ENCODE measurements at regions of chr6 and their contacts with region 1.

Region 1: GRCh38 chr6:99868074-99868702 is 125.8 kb downstream of the MCHR2 start:
- DNase-seq: no peak
- H3K4me3 ChIP-seq: peak overlapping the region; percentile 24
- CTCF ChIP-seq: peak; percentile 80

Region 2: DNA sequence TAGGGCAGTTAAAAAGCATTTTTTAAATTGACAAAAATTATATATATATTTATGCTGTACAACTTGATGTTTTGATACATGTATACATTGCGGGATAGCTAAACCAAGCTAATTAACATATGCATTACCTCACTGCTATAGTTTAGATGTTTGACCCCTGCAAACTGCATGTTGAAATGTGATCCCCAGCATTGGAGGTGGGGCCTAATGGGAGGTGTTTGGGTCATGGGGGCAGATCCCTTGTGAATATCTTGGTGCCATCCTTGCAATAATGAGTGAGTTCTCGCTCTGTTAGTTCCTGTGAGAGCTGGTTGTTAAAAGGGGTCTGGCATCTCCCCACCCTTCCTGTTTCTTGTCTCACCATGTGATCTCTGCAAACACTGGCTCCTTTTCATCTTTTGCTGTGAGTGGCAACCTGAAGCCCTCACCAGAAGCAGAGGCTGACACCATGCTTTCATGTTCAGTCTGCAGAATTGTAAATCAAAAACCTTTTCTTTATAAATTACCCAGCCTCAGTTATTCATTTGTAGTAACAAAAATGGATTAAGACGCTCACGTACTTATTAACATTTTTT is 14.0 kb after region 1 on chr6:
- CTCF ChIA-PET with region 1: interaction called, 49 read pairs
- POLR2A ChIA-PET with region 1: no interaction called
- DNase-seq: no peak
- H3K4me3 ChIP-seq: no peak overlapping the region
- CTCF ChIP-seq: no peak

Region 3: GRCh38 chr6:99993533-99994251 is 125.5 kb after region 1 on chr6 and contains the start of gene MCHR2:
- CTCF ChIA-PET with region 1: interaction called, 19 read pairs
- POLR2A ChIA-PET with region 1: no interaction called
- DNase-seq: no peak
- H3K4me3 ChIP-seq: peak within 1 kb of the TSS; percentile 29
- CTCF ChIP-seq: no peak

Region 4: GRCh38 chr6:100078509-100078908 is 210.3 kb after region 1 on chr6:
- CTCF ChIA-PET with region 1: interaction called, 19 read pairs
- POLR2A ChIA-PET with region 1: no interaction called
- DNase-seq: no peak
- H3K4me3 ChIP-seq: no peak overlapping the region
- CTCF ChIP-seq: peak; percentile 43

Region 5: GRCh38 chr6:100093405-100093804 is 225.2 kb after region 1 on chr6:
- CTCF ChIA-PET with region 1: interaction called, 350 read pairs
- POLR2A ChIA-PET with region 1: no interaction called
- DNase-seq: no peak
- H3K4me3 ChIP-seq: no peak overlapping the region
- CTCF ChIP-seq: no peak

Region 6: DNA sequence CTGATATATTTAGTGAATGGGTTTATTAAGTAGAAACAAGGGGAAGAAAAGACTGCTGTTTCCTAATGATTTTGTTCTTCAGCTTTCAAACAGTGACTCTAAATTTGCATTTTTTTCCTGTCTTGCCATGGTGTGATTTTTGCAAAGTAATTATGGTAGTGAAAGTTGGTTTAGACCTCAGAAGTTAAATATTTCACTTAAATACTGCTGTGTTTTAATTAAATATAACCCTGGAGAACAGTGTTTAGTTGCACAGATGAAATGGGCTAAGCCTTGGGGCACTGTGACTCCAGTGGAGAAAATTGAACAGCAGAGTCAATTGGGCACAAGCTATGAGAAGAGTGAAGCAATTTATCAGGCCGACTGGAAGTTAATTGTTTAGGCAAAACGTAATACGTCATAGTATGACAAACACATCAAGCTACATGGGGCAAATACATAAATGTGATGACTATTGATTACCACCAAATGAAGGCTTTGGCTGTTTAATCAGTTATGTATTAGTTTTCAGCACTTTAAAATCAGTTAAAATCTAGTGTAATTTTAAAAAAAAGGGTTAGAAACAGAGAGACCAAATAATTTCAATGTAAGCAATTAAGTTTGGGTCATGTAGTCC is 237.1 kb after region 1 on chr6:
- CTCF ChIA-PET with region 1: interaction called, 350 read pairs
- POLR2A ChIA-PET with region 1: no interaction called
- DNase-seq: no peak
- H3K4me3 ChIP-seq: no peak overlapping the region
- CTCF ChIP-seq: no peak

Region 7: DNA sequence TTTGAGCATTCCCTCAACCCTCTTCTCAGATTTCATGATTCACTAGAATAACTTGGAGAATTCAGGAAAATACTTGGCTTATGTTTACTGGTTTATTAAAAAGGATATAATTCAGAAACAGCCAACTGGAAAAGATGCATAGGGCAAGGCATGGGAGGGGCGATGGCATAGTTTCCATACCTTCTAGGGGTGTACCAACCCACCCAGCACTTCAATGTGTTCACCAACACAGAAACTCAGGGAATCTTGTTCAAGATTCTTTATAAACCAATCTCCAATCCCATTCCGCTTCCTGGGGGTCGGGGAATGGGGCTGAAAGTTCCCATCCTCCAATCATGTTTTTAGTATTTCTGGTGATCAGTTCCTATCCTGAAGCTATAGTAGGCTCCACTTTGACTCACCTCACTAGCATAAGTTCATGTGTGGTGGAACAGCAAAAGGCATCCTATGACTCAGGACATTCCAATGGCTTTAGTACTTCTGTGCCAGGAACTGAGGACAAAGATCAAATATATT is 432.1 kb after region 1 on chr6:
- CTCF ChIA-PET with region 1: no interaction called
- POLR2A ChIA-PET with region 1: no interaction called
- DNase-seq: peak; percentile 90
- H3K4me3 ChIP-seq: no peak overlapping the region
- CTCF ChIP-seq: no peak

Region 8: DNA sequence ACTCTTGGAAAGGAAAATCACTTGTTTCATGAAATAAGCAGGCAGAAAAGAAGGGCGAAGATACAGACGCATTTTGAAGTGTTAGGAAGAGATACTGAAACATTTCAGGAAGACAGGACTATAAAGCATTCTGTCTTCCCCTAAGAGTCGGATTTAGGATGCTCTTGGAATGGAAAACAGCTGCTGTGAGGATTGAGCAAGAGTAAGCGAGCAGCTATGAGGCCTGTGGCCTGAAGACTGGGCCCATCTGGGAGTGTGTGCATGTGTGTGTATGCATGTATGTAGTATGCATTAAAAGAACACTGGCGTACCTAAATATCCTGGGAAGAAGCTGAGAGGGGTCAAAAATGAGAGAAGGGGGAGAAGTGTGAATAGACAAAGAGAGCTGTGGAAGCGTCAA is 512.9 kb after region 1 on chr6:
- CTCF ChIA-PET with region 1: no interaction called
- POLR2A ChIA-PET with region 1: no interaction called
- DNase-seq: no peak
- H3K4me3 ChIP-seq: no peak overlapping the region
- CTCF ChIP-seq: no peak

Region 9: GRCh38 chr6:100664274-100665040 is 796.3 kb after region 1 on chr6:
- CTCF ChIA-PET with region 1: interaction called, 20 read pairs
- POLR2A ChIA-PET with region 1: no interaction called
- DNase-seq: no peak
- H3K4me3 ChIP-seq: no peak overlapping the region
- CTCF ChIP-seq: peak; percentile 37